ENCODE measurements at regions of chr22 and their contacts with region 1.

Region 1: GRCh38 chr22:25362215-25362882 is 142.9 kb downstream of the CRYBB2 start:
- DNase-seq: peak; percentile 53
- ATAC-seq: peak; percentile 57
- H3K4me3 ChIP-seq: no peak overlapping the region
- H3K27ac ChIP-seq: no peak overlapping the region
- H3K4me1 ChIP-seq: no peaks in the 10 kb centered on the region
- H3K27me3 ChIP-seq: no peaks in the 10 kb centered on the region
- CTCF ChIP-seq: peak; percentile 83

Region 2: GRCh38 chr22:25447686-25448434 is 85.5 kb after region 1 on chr22:
- CTCF ChIA-PET with region 1: no interaction called
- POLR2A ChIA-PET with region 1: no interaction called
- intact Hi-C with region 1: loop called (anchors 10 kb)
- DNase-seq: peak; percentile 81
- ATAC-seq: peak; percentile 88
- H3K4me3 ChIP-seq: peak overlapping the region; percentile 96
- H3K27ac ChIP-seq: no peak overlapping the region
- H3K4me1 ChIP-seq: peaks cover 5% of the 10 kb centered on the region; the same call in 1 of the 2 replicates
- H3K27me3 ChIP-seq: no peaks in the 10 kb centered on the region
- CTCF ChIP-seq: peak; percentile 73